IMR-90 (cell line): ENCODE measurements at regions of chr6 and their contacts with region 1.

Region 1: DNA sequence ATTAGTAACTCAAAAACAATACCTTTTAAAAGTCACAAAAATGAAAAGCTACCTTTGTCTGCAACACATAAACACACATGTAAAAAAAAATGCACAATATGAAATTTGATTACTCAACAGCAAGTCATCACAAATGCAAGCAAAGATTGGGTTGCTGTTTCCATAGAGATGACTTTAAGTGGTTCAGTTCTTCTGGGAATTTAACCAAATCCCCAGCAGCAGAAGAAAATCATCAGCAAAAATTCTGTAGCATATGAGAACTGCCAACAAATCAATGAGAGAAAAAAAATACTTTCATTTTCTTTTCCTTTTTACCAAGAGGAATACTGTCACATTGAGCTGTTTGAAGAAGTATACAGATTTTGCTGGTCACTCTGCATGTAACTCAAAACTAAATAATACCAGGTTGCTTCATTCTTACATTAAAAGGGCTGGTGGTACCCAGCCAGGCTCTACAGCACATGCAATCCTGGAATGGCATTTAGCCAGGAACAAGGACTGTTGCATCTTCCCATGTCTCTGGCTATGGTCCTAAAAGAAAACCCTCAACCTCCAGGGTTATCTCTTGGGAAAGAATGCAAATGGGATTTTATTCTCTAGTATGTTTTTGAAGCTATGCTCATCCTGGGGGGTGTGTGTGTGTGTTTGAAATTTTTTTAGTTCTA is 158.3 kb downstream of the OPRM1 start:
- DNase-seq: peak; percentile 62
- ATAC-seq: peak; percentile 40; the same call in 1 of the 2 replicates
- H3K4me3 ChIP-seq: no peak overlapping the region
- H3K27ac ChIP-seq: no peak overlapping the region; the same call in 1 of the 2 replicates
- H3K4me1 ChIP-seq: no peaks in the 10 kb centered on the region
- H3K27me3 ChIP-seq: no peaks in the 10 kb centered on the region
- CTCF ChIP-seq: no peak
- POLR2A ChIP-seq: no peak
- RAD21 ChIP-seq: no peak

Region 2: GRCh38 chr6:154239392-154239791 is 42.1 kb after region 1 on chr6:
- CTCF ChIA-PET with region 1: no interaction called
- POLR2A ChIA-PET with region 1: no interaction called
- dilution Hi-C with region 1: no loop called
- in situ Hi-C with region 1: no loop called
- intact Hi-C with region 1: loop called (anchors 5 kb)
- DNase-seq: no peak
- ATAC-seq: no peak
- H3K4me3 ChIP-seq: no peak overlapping the region
- H3K27ac ChIP-seq: no peak overlapping the region
- H3K4me1 ChIP-seq: peaks cover 6% of the 10 kb centered on the region; the same call in 1 of the 2 replicates
- H3K27me3 ChIP-seq: no peaks in the 10 kb centered on the region; the same call in 1 of the 2 replicates
- CTCF ChIP-seq: no peak
- POLR2A ChIP-seq: no peak
- RAD21 ChIP-seq: no peak

Region 3: DNA sequence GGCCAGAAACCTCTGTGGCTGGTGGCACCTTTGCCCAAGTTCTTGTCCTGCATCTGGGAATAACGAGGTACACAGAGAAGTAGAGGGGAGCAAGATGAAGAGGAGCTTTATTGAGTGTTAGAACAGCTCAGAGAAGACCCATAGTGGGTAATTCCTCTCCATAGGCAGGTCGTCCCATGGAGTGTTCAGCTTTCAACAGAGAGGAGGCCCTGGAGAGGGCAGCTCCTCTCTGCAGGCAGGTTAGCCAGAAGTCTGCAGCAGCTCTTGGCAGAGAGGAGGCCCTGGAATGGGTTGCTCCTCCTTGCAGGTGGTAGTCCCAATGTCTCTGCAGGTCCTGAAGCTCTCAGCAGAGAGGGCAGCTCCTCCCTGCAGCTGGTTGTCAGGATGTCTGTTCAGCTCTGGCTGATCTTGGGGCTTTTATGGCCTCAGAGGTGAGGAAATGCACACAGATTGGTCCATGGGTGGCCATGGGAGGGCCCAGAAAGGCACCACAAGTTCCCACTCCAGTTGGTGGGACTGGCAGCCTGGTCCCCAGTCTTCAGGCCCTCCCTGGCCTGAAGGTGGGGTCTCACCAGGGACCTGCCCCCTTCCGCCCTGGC is 70.3 kb after region 1 on chr6:
- CTCF ChIA-PET with region 1: no interaction called
- POLR2A ChIA-PET with region 1: no interaction called
- dilution Hi-C with region 1: no loop called
- in situ Hi-C with region 1: no loop called
- intact Hi-C with region 1: no loop called
- DNase-seq: no peak
- ATAC-seq: no peak
- H3K4me3 ChIP-seq: no peak overlapping the region
- H3K27ac ChIP-seq: no peak overlapping the region
- H3K4me1 ChIP-seq: no peaks in the 10 kb centered on the region
- H3K27me3 ChIP-seq: no peaks in the 10 kb centered on the region
- CTCF ChIP-seq: no peak
- POLR2A ChIP-seq: no peak
- RAD21 ChIP-seq: no peak

Region 4: DNA sequence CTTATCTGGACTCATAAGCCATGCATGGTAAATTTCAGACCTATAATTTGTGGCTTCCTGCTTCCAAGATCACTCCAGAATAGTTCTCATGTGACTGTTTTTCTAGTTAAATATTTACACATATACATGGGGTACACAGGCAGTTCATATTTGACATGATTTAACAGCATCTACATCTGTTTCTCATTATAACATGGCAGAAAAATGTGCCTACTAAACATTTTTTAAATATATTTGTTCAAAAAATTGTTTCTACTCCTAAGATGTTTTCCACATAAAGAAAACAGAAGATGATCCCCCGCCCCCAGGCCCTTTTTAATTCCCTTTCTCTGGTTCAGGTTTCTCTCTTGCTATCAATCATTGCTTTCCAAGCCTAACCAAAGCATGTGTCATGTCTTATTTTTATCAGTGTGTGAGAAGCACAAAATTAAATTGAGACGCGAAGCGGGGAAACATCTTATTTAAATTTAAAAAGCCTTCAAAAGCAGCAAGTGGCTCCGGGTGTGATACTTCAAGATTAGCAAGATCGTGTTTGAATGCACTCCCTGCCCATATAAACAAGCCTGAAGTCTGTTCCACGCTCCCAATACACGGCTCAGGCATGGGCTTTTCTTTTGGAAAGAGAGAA is 122.0 kb after region 1 on chr6:
- CTCF ChIA-PET with region 1: no interaction called
- POLR2A ChIA-PET with region 1: no interaction called
- dilution Hi-C with region 1: no loop called
- in situ Hi-C with region 1: no loop called
- intact Hi-C with region 1: no loop called
- DNase-seq: peak; percentile 88
- ATAC-seq: peak; percentile 79
- H3K4me3 ChIP-seq: 0 out of 2 replicates have a peak overlapping the region, but pooled peaks have one; percentile 2
- H3K27ac ChIP-seq: peak overlapping the region; percentile 66; the same call in 1 of the 2 replicates
- H3K4me1 ChIP-seq: peaks cover 6% of the 10 kb centered on the region
- H3K27me3 ChIP-seq: no peaks in the 10 kb centered on the region
- CTCF ChIP-seq: no peak
- POLR2A ChIP-seq: no peak
- RAD21 ChIP-seq: no peak